Panc1 (cell line): ENCODE measurements at regions of chr11 and their contacts with region 1.

Region 1: DNA sequence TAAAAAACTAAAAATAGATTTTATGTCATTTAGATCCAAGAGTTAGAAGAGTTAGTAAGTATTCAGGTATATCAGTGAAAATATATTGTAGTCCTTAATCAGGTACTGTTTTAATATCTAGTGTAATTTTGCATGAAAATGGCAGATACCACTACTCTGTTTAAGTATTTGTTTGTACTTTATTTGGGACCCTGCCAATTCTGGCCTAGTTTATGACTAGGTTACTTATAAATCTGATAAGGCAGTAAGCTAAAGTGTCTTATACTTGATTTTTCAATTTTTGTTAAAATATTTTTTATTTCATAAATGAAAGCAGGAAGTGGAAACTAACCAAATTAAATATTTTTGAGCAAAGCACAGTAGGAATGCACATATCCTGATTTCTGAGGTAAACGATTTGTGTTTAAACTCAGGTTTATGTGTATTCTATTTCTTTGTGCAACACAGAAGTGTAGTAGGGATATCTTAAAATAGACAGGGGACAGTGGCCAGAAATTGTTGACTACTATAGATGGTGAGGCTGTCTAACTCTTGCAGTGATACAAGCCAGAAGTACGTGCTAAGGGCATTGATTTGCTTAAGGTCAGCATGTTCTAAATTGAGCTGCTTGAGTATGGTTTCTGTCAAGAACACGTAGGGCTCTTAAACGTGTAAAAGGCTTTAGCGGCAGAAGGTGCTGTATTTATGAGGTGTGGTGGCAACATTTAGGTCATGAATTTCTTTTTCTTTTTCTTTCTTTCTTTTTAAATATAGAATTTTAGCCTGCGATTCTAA is 34.0 kb downstream of the HIPK3 start:
- DNase-seq: no peak
- ATAC-seq: no peak
- H3K4me3 ChIP-seq: no peak overlapping the region
- H3K27ac ChIP-seq: no peak overlapping the region
- H3K4me1 ChIP-seq: no peaks in the 10 kb centered on the region; the same call in 1 of the 2 replicates
- H3K27me3 ChIP-seq: no peaks in the 10 kb centered on the region
- CTCF ChIP-seq: no peak

Region 2: DNA sequence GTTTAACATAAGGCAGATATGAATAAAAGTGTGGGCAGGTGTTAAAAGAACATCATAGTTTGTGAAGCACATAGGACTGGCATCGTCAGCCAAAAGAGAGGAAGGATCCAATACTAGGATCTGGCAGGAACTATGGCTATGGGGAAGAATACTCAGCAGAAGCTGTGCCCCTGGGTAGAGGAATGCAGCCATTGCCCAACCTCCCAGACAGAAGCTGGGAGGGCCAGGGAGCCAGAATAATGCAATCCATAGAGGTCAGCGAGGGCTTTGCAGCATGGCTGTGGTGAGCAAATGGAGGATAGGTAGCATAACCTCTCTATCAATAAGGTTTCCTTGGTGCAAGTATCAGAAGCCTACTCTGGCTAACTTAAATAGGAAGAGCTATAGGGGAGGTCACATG is 118.2 kb before region 1 on chr11:
- CTCF ChIA-PET with region 1: no interaction called
- POLR2A ChIA-PET with region 1: interaction called, 11 read pairs
- in situ Hi-C with region 1: no loop called
- intact Hi-C with region 1: no loop called
- DNase-seq: no peak
- ATAC-seq: no peak
- H3K4me3 ChIP-seq: no peak overlapping the region
- H3K27ac ChIP-seq: no peak overlapping the region
- H3K4me1 ChIP-seq: no peaks in the 10 kb centered on the region
- H3K27me3 ChIP-seq: no peaks in the 10 kb centered on the region
- CTCF ChIP-seq: no peak